Activated CD8-positive, alpha-beta T cell treated with anti-CD3 and anti-CD28 coated beads for 36 hours (primary cell): ENCODE measurements at regions of chr12 and their contacts with region 1.

Region 1: DNA sequence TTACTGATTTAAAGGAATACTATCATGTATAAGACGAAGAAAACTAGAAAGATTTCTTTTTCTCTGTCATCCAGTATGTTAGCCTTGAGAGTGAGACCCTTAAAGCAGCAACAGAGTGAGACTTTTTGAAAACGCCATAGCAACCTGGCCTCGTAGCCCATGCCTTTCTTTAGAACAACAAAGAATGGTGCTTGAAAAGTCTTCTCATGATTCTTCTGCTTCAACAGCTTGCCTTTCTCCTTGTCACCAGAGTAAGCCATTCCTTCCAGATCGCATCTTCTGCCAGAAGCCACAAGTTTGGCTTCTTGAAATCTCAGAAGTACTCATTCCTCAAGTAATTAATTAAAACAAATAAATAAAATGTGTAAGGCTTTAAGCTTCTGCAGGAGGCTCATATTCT is 109.3 kb downstream of the PDE3A start:
- DNase-seq: no peak
- ATAC-seq: no peak
- H3K4me3 Mint-ChIP-seq: no peak overlapping the region
- H3K27ac Mint-ChIP-seq: no peak overlapping the region
- H3K4me1 Mint-ChIP-seq: no peaks in the 10 kb centered on the region
- H3K27me3 Mint-ChIP-seq: no peaks in the 10 kb centered on the region
- CTCF ChIP-seq: no peak

Region 2: DNA sequence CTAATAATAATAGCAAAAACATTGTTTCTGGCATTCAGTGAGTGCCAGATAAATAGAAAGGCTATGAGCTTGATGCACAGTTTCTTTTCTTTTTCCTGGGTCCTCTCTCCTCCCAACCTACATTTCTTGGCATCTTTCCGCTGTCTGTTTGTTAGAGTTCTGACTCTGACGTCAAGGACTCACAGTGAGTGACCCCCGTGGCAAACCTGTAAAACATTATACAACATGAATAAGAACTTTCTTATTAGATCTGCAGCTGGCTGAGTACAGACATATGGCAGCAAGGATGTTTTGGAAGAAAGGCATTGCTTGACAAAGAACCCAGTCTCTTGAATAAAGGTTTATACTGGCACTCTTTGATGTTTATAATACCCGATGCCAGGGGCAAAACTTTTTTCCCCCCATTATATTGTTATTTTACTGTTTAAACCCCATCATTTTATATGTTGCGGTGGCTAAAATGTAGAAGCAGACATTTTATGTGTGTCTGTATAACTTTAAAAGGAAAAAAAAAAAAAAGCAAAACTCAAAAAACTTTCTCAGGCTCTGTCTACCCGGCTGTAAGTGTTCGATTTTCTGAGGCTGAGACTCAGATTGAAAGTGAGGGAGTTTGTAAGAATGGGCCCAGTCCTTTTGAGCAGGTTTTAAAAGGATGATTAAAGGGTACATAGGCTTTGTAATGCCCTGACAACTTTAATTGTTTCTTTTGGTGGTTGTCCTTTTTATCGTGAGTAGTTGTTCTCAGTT is 49.9 kb after region 1 on chr12:
- CTCF ChIA-PET with region 1: no interaction called
- POLR2A ChIA-PET with region 1: no interaction called
- intact Hi-C with region 1: loop called (anchors 5 kb)
- DNase-seq: no peak
- ATAC-seq: no peak
- H3K4me3 Mint-ChIP-seq: no peak overlapping the region
- H3K27ac Mint-ChIP-seq: no peak overlapping the region
- H3K4me1 Mint-ChIP-seq: no peaks in the 10 kb centered on the region
- H3K27me3 Mint-ChIP-seq: no peaks in the 10 kb centered on the region
- CTCF ChIP-seq: no peak